ENCODE measurements at regions of chr17 and their contacts with region 1.

Region 1: GRCh38 chr17:74770498-74771318 is 5.4 kb downstream of the NAT9 start:
- DNase-seq: peak; percentile 51 to 85 (median 75)
- ATAC-seq: peak; percentile 88 to 96 (median 88)
- H3K4me3 ChIP-seq: no peak overlapping the region
- H3K4me3 Mint-ChIP-seq: no peak overlapping the region
- H3K27ac ChIP-seq: peak overlapping the region; percentile 14
- H3K27ac Mint-ChIP-seq: peak overlapping the region; percentile 84 to 86
- H3K4me1 ChIP-seq: peaks cover 0 to 62% of the 10 kb centered on the region in 2 experiments
- H3K4me1 Mint-ChIP-seq: peaks cover 37 to 48% (median 45%) of the 10 kb centered on the region in 3 donors
- H3K27me3 ChIP-seq: no peaks in the 10 kb centered on the region
- H3K27me3 Mint-ChIP-seq: no peaks in the 10 kb centered on the region

Region 2: DNA sequence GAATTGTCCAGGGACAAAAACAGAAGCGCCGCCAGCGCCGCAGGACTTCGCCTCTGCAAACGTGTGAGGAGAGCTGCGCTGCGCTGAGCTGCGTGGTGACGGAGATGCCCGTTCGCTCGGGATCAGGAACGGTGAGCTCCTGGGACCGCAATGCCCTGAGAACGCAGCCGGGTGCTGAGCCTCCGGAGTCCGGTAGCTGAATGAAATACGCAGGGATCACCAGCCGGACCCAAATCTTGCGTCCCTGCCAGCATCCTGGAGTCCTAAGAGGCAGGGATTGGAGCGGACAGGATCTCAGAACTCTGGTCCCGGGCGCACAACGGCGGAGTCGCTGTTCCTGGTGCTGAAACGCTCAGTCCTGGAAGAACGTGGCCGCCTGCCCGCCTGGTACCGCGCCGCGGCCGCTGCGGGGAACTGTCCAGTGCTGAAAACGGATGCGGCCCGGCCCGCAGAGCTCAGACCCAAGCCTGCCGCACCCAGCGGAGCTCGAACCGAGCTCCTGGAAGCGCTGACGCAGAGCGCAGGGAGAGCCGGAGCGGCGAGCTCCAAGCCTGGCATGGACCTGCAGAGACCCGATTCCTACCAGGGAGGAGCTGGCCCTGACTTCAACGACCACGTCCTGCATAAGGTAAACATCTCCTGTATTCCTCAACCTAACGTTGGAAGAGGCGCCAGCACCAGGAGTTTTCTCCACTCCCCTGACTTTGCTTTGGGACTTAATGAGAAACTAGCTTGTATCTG is 99.5 kb before region 1 on chr17:
- CTCF ChIA-PET with region 1: no interaction called
- POLR2A ChIA-PET with region 1: no interaction called
- DNase-seq: peak; percentile 32 to 87 (median 67)
- ATAC-seq: peak; percentile 75 to 97 (median 85)
- H3K4me3 ChIP-seq: no peak overlapping the region
- H3K4me3 Mint-ChIP-seq: no peak overlapping the region
- H3K27ac ChIP-seq: no peak overlapping the region
- H3K27ac Mint-ChIP-seq: no peak overlapping the region
- H3K4me1 ChIP-seq: peaks cover 0 to 9% of the 10 kb centered on the region in 2 experiments
- H3K4me1 Mint-ChIP-seq: peaks cover 4 to 5% (median 4%) of the 10 kb centered on the region in 3 donors
- H3K27me3 ChIP-seq: peaks cover 3 to 43% of the 10 kb centered on the region in 2 experiments
- H3K27me3 Mint-ChIP-seq: peaks cover 41 to 64% of the 10 kb centered on the region in 2 donors

Region 3: DNA sequence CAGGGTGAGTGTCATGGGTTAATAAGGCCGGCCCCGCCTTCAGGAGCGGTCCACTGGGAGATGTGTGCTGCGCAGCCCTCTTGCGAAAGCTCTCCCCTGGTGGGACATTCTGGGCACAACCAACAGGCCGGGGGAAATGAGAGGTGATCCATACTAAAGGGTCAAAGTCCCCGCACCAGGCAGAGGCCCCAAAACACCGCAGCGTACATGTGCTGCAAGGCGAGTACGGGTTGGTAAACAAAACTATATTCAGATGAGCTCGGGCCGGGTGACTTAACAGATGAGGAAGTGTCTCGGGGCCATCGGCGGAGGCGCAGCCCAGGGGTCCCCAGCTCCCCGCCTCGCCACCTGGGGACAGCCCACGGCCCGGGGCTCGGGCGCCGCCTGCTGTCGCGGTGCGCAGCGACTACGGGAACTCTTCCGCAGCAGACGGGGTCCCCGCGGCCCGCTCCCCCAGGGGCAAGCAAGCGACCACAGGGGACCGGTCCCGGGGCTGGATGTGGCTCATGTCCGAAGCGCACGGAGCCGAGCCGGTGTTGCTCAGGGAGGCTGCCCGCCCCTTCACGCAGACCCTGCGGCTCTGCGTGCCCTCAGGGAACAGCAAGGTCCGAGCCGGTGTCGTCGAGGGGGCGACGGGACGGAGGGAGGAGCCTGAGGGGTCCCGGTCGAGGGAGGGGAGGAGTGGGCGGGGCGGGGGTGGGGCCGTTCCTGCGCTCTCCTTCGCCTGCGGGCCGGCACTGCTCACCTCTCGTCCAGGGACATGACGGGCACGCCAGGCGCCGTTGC is 34.0 kb before region 1 on chr17 and contains the start of gene RAB37:
- CTCF ChIA-PET with region 1: interaction called, 3 to 19 read pairs
- POLR2A ChIA-PET with region 1: no interaction called
- DNase-seq: peak in 23 of 35 experiments; percentile 34 to 73 (median 46)
- ATAC-seq: peak; percentile 24 to 54 (median 35)
- H3K4me3 ChIP-seq: peak within 1 kb of the TSS; percentile 83 to 89
- H3K4me3 Mint-ChIP-seq: peak within 1 kb of the TSS; percentile 87 to 89 (median 87)
- H3K27ac ChIP-seq: peak within 1 kb of the TSS; percentile 80
- H3K27ac Mint-ChIP-seq: peak within 1 kb of the TSS; percentile 99 to 100
- H3K4me1 ChIP-seq: peaks cover 31 to 76% of the 10 kb centered on the region in 2 experiments
- H3K4me1 Mint-ChIP-seq: peaks cover 48 to 57% (median 54%) of the 10 kb centered on the region in 3 donors
- H3K27me3 ChIP-seq: no peaks in the 10 kb centered on the region
- H3K27me3 Mint-ChIP-seq: no peaks in the 10 kb centered on the region
- total RNA-seq, gene RAB37: 31.2 to 73.4 (median 40.7) TPM

Region 4: GRCh38 chr17:74748529-74749365 is 22.0 kb before region 1 on chr17 and contains the start of gene NHERF1:
- CTCF ChIA-PET with region 1: interaction called, 9 to 11 read pairs
- POLR2A ChIA-PET with region 1: no interaction called
- DNase-seq: peak in 33 of 35 experiments; percentile 39 to 97 (median 86)
- ATAC-seq: peak; percentile 85 to 88 (median 88)
- H3K4me3 ChIP-seq: peak within 1 kb of the TSS; percentile 92
- H3K4me3 Mint-ChIP-seq: peak within 1 kb of the TSS; percentile 92 to 100 (median 98)
- H3K27ac ChIP-seq: peak within 1 kb of the TSS; percentile 43
- H3K27ac Mint-ChIP-seq: peak within 1 kb of the TSS; percentile 93 to 97
- H3K4me1 ChIP-seq: peaks cover 41 to 80% of the 10 kb centered on the region in 2 experiments
- H3K4me1 Mint-ChIP-seq: peaks cover 67 to 74% (median 69%) of the 10 kb centered on the region in 3 donors
- H3K27me3 ChIP-seq: no peaks in the 10 kb centered on the region
- H3K27me3 Mint-ChIP-seq: no peaks in the 10 kb centered on the region
- total RNA-seq, gene NHERF1: 104 to 260 (median 223) TPM